ENCODE measurements at regions of chr7 and their contacts with region 1.

Region 1: DNA sequence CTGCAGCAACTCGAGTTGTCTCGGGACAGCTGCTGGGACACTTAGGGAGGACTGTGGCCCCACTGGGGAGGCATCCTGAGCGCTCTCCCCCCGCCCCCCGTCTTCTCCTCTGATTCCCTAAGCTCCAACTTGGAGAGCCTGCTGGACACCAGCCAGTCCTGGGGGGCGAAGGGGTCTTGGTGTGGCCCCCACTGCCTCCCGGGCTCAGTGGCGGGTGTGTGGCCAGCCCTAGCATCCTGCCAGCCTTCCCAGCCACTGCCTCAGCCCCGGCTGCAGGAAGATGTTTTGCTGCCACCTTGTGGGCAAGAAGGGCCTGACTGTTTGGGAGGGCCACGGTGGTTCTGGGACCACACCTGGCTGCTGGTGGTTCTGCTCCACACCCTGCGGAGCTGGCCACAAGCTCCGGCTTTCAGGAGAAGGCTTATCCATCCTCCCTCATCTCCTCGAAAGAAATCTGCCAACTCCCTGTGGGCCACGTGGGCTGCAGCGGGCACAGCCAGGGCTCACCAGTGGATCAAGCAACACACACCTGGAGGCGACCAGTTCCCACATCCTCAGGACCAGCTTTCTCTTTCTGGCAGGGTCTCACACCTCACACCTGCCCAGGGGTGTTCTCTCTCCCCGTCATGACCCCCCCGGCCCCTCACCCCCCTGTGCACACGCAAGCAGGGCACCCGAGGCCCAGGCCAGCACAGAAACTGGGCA is 24.8 kb downstream of the AGAP3 start:
- DNase-seq: peak; percentile 52 to 82
- H3K4me3 ChIP-seq: no peak overlapping the region
- H3K27ac ChIP-seq: no peak overlapping the region
- H3K4me1 ChIP-seq: peaks cover 26% of the 10 kb centered on the region
- H3K27me3 ChIP-seq: no peaks in the 10 kb centered on the region
- CTCF ChIP-seq: peak; percentile 92

Region 2: DNA sequence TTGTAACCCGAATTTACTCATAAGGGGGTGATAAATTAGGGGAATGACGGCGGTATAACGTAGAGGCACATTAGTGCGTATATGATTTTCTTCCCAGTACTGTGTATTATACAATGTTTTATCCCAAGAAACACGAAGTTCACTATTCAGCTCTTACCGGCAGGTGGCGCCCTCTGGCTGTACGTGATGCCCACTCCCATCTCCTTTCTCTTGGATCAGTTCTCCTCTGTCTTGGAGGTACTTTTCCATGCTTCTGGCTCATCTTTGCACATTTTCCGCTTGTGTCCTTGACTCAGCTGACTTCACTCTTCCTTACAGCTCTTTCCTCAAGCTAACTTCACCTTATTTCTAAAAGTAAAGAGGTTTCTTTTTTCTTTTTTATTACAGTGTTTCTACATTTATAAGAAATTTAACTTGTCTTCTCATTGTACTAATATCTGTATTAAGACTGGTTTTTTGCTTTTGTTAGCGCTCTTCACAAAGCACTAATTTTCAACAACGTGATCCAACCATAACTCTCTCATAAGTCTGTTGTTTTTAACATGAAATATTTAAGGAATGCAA is 332.3 kb before region 1 on chr7:
- CTCF ChIA-PET with region 1: no interaction called
- POLR2A ChIA-PET with region 1: no interaction called
- intact Hi-C with region 1: loop called (anchors 1 kb)
- DNase-seq: peak; percentile 50 to 77
- H3K4me3 ChIP-seq: no peak overlapping the region
- H3K27ac ChIP-seq: no peak overlapping the region
- H3K4me1 ChIP-seq: no peaks in the 10 kb centered on the region
- H3K27me3 ChIP-seq: peaks cover 43% of the 10 kb centered on the region
- CTCF ChIP-seq: peak; percentile 91

Region 3: DNA sequence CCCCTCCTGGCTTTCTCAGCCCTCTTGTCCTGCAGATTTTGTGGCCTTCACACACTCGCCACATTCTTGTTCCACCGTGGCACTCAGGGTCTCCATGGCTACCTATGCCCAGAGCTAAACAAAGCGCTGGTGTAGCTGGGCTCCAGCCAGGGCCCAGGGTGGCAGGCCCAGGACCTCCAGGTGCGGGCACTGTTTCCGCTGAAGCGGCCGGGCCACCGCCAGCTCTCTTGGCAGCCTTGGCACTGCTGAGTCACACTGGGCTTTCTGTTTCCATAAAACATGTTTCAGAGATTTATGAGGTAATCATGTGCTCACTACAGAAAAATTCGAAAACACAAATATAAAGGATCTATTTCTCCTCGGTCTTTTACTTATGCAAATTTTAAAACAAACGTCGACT is 207.5 kb before region 1 on chr7:
- CTCF ChIA-PET with region 1: interaction called, 3 read pairs
- POLR2A ChIA-PET with region 1: interaction called, 5 read pairs
- intact Hi-C with region 1: loop called (anchors 1 kb)
- DNase-seq: peak; percentile 64 to 93
- H3K4me3 ChIP-seq: no peak overlapping the region
- H3K27ac ChIP-seq: no peak overlapping the region
- H3K4me1 ChIP-seq: no peaks in the 10 kb centered on the region
- H3K27me3 ChIP-seq: peaks cover 52% of the 10 kb centered on the region
- CTCF ChIP-seq: no peak

Region 4: DNA sequence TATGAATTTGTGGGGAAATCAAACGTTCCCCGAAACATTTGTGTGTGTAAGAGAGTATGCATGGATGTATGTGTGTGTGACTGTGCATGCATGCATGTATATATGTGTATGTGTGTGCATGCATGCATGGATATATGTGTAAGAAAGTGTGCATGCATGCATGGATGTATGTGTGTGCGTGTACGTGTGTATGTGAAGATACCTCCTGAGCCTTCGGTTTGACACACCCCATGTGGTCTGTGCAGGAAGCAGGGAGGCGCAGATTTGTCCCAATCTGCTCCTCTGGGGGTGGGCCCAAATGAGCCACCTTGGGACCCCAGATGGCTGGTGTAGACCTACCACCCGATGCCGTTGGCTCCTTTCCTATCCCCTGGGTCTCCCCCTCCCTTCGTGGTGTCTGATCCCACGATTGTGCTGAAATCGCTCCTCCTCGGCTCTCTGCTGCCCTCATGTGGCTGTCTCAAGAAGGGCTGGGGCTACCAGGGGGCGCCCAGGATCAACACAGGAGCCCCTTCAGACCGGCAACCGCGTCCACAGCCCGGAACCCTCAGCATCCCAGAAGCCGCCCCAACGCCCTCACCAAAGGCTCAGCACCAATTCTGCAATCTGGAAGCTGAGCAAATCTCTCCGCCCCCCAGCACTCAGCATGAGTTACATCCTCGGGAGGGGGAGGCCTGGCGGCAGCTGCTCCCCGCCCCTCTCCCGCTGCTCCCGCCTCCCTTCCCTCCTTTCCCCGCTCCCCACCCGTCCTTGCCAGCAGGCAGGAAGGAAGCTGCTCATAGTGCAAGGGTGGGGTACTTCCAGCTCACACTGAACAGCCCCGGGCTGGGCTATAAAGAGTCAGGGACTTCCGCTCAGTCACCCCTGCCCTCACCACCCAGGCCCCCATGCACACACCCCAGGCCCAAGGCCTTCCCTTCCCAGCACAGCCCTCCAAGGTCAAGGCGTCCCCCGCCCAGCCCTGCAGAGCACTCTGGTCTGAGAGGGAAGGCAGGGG is 122.6 kb before region 1 on chr7:
- CTCF ChIA-PET with region 1: interaction called, 10 read pairs
- POLR2A ChIA-PET with region 1: no interaction called
- intact Hi-C with region 1: no loop called
- DNase-seq: no peak
- H3K4me3 ChIP-seq: no peak overlapping the region
- H3K27ac ChIP-seq: no peak overlapping the region
- H3K4me1 ChIP-seq: no peaks in the 10 kb centered on the region
- H3K27me3 ChIP-seq: peaks cover 22% of the 10 kb centered on the region; the same call in 1 of the 2 replicates
- CTCF ChIP-seq: peak; percentile 58; the same call in 1 of the 2 replicates

Region 5: GRCh38 chr7:151085691-151086620 is 25.1 kb before region 1 on chr7 and contains the start of gene AGAP3:
- CTCF ChIA-PET with region 1: interaction called, 4 read pairs
- POLR2A ChIA-PET with region 1: no interaction called
- intact Hi-C with region 1: loop called (anchors 2 kb)
- DNase-seq: peak; percentile 87 to 97
- H3K4me3 ChIP-seq: peak within 1 kb of the TSS; percentile 100
- H3K27ac ChIP-seq: peak within 1 kb of the TSS; percentile 41; the same call in 1 of the 2 replicates
- H3K4me1 ChIP-seq: peaks cover 47% of the 10 kb centered on the region
- H3K27me3 ChIP-seq: no peaks in the 10 kb centered on the region
- CTCF ChIP-seq: no peak
- total RNA-seq, gene AGAP3: 103 TPM in 2 replicates

Region 6: DNA sequence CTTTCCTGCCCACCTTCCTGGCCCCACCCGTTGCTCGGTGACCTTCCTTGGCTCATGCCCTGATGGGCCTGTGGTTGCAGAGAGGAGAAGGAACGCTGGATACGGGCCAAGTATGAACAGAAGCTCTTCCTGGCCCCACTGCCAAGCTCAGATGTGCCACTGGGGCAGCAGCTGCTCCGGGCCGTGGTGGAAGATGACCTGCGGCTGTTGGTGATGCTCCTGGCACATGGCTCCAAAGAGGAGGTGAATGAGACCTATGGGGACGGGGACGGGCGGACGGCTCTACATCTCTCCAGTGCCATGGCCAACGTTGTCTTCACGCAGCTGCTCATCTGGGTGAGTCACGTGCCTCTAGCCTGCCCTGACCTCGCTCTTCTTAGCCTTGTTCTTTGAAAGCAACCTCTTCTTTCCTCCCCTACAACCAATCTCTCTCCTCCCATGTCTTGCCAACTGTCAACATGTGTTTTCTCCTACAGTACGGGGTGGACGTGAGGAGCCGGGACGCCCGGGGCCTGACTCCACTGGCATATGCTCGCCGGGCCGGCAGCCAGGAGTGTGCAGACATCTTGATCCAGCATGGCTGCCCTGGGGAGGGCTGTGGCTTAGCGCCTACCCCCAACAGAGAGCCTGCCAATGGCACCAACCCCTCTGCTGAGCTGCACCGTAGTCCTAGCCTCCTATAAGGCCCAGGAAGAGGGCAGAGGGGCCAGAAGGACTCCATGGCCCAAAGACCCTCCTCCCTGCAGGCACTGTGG is 32.3 kb after region 1 on chr7:
- CTCF ChIA-PET with region 1: no interaction called
- POLR2A ChIA-PET with region 1: no interaction called
- intact Hi-C with region 1: no loop called
- DNase-seq: no peak
- H3K4me3 ChIP-seq: no peak overlapping the region
- H3K27ac ChIP-seq: no peak overlapping the region
- H3K4me1 ChIP-seq: no peaks in the 10 kb centered on the region
- H3K27me3 ChIP-seq: no peaks in the 10 kb centered on the region
- CTCF ChIP-seq: no peak

Region 7: DNA sequence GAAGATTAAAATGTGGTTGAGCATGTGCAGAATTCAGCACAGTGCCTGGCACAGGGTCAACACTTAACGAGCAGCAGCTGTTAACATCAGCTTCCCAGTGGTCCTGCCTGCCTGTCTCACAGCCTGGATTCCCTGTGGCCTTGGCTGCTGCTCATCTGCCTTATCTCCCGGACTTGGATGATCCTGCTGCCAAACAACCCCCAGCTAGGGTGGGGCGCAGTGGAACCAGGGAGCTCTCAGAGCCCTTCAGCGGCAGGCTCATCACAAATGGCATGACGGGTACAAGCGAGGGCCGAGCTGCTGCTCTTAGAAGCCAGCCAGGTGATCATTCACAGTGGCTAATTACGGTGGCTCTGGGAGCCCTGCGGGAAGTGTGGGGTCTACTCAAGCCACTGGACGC is 150.4 kb after region 1 on chr7:
- CTCF ChIA-PET with region 1: no interaction called
- POLR2A ChIA-PET with region 1: no interaction called
- intact Hi-C with region 1: no loop called
- DNase-seq: no peak
- H3K4me3 ChIP-seq: no peak overlapping the region
- H3K27ac ChIP-seq: no peak overlapping the region
- H3K4me1 ChIP-seq: no peaks in the 10 kb centered on the region
- H3K27me3 ChIP-seq: peaks cover 89% of the 10 kb centered on the region
- CTCF ChIP-seq: no peak

Region 8: GRCh38 chr7:151339651-151340382 is 228.7 kb after region 1 on chr7:
- CTCF ChIA-PET with region 1: no interaction called
- POLR2A ChIA-PET with region 1: interaction called, 19 read pairs
- intact Hi-C with region 1: no loop called
- DNase-seq: no peak
- H3K4me3 ChIP-seq: no peak overlapping the region
- H3K27ac ChIP-seq: no peak overlapping the region
- H3K4me1 ChIP-seq: peaks cover 9% of the 10 kb centered on the region
- H3K27me3 ChIP-seq: no peaks in the 10 kb centered on the region
- CTCF ChIP-seq: no peak

Measured in PC-9 (cell line).